ENCODE measurements at regions of chr9 and their contacts with region 1.

Region 1: DNA sequence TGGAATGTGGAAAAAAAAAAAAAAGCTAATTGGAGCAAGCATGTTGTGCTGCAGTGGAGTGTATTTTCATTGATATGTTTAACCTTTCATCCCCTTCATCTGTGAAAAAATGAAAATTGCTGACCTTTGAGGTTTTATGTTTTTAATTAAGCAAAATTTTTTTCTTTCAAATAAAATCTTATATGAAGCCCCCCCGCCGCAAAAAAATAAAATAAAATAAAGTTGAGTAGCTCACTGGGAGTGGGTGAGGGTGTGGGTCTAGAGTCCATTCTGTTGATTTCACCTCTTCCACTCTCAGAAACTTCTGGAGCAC is 43.3 kb downstream of the TEK start:
- DNase-seq: no peak
- ATAC-seq: no peak
- H3K4me3 ChIP-seq: no peak overlapping the region
- H3K27ac ChIP-seq: no peak overlapping the region
- H3K4me1 ChIP-seq: peaks cover 6% of the 10 kb centered on the region; the same call in 1 of the 2 replicates
- H3K27me3 ChIP-seq: no peaks in the 10 kb centered on the region
- CTCF ChIP-seq: no peak

Region 2: DNA sequence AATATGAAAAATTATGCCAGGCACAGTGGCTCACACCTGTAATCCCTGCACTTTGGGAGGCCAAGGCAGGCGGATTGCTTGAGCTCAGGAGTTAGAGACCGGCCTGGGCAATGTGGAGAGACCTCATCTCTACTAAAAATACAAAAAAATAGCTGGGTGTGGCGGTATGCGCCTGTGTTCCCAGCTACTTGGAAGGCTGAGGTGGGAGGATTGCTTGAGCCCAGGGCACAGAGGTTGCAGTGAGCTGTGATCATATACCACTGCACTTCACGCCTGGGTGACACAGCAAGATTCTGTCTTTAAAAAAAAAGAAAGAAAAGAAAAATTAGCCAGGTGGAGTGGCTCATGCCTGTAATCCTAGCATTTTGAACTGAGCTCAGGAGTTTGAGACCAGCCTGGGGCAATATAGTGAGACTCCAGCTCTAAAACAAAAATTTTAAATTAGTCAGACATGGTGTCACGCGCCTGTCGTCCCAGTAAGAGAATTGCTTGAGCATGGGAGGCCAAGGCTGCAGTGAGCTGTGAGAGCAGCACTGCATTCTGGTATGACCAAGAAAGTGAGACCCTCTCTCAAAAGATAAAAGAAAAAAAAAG is 223.4 kb before region 1 on chr9:
- CTCF ChIA-PET with region 1: no interaction called
- POLR2A ChIA-PET with region 1: no interaction called
- intact Hi-C with region 1: no loop called
- DNase-seq: no peak
- ATAC-seq: no peak
- H3K4me3 ChIP-seq: no peak overlapping the region
- H3K27ac ChIP-seq: no peak overlapping the region
- H3K4me1 ChIP-seq: no peaks in the 10 kb centered on the region
- H3K27me3 ChIP-seq: no peaks in the 10 kb centered on the region
- CTCF ChIP-seq: no peak

Region 3: GRCh38 chr9:27117489-27118135 is 34.7 kb before region 1 on chr9:
- CTCF ChIA-PET with region 1: no interaction called
- POLR2A ChIA-PET with region 1: interaction called, 10 read pairs
- intact Hi-C with region 1: no loop called
- DNase-seq: peak; percentile 89
- ATAC-seq: peak; percentile 97
- H3K4me3 ChIP-seq: no peak overlapping the region
- H3K27ac ChIP-seq: peak overlapping the region; percentile 94
- H3K4me1 ChIP-seq: peaks cover 27% of the 10 kb centered on the region
- H3K27me3 ChIP-seq: no peaks in the 10 kb centered on the region
- CTCF ChIP-seq: no peak

Region 4: GRCh38 chr9:27395484-27395921 is 243.1 kb after region 1 on chr9:
- CTCF ChIA-PET with region 1: no interaction called
- POLR2A ChIA-PET with region 1: no interaction called
- intact Hi-C with region 1: no loop called
- DNase-seq: no peak
- ATAC-seq: no peak
- H3K4me3 ChIP-seq: no peak overlapping the region
- H3K27ac ChIP-seq: no peak overlapping the region
- H3K4me1 ChIP-seq: peaks cover 7% of the 10 kb centered on the region
- H3K27me3 ChIP-seq: no peaks in the 10 kb centered on the region
- CTCF ChIP-seq: no peak

Measured in PC-3 (cell line).